ENCODE measurements at regions of chr15 and their contacts with region 1.

Region 1: DNA sequence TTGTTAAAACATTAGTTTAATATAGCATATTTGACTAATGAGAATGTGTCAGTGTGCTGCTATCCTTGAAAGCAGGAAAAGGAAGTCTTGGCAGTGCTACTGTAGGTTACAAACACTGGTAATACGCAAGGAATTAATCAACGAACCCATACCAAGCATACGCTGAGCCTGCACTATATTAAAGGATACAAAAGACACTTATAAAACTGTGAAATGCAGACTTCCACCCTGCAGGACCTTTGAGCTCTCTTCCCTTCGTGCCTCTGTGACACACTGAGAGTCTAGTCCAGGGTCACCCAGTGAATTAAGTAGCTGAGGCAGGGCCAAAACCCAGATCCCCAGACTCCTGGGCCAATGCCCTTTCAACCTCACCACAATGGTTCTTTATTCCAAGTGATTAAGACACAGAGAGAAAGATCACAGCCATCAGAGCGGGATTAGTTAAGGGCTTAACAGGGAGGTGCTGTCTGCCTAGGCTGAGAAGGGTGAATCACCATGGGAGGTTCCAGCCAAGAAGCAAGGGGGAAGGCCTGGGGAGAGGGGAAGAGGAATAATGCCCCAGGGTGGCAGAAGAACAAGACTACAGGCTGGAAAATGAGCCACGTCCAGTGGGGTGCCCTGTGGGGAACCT is 6.8 kb downstream of the ANXA2 start:
- DNase-seq: peak; percentile 82
- H3K4me3 ChIP-seq: no peak overlapping the region
- H3K27ac ChIP-seq: peak overlapping the region; percentile 95 to 99 (median 98)
- H3K4me1 ChIP-seq: peaks cover 0 to 85% (median 72%) of the 10 kb centered on the region in 4 donors
- H3K27me3 ChIP-seq: no peaks in the 10 kb centered on the region
- CTCF ChIP-seq: no peak
- EP300 ChIP-seq: no peak
- POLR2A ChIP-seq: no peak

Region 2: GRCh38 chr15:60370869-60371700 is 19.9 kb before region 1 on chr15:
- intact Hi-C with region 1: loop called (anchors 2 kb)
- DNase-seq: peak; percentile 91
- H3K4me3 ChIP-seq: no peak overlapping the region
- H3K27ac ChIP-seq: peak overlapping the region; percentile 67 to 84 (median 73)
- H3K4me1 ChIP-seq: peaks cover 0 to 60% (median 56%) of the 10 kb centered on the region in 4 donors
- H3K27me3 ChIP-seq: no peaks in the 10 kb centered on the region
- CTCF ChIP-seq: no peak
- EP300 ChIP-seq: peak in 1 of 4 donors; percentile 56
- POLR2A ChIP-seq: no peak

Region 3: GRCh38 chr15:60496853-60497252 is 105.9 kb after region 1 on chr15:
- intact Hi-C with region 1: no loop called
- DNase-seq: no peak
- H3K4me3 ChIP-seq: no peak overlapping the region
- H3K27ac ChIP-seq: no peak overlapping the region
- H3K4me1 ChIP-seq: no peaks in the 10 kb centered on the region
- H3K27me3 ChIP-seq: no peaks in the 10 kb centered on the region
- CTCF ChIP-seq: no peak
- EP300 ChIP-seq: no peak
- POLR2A ChIP-seq: no peak

Measured in sigmoid colon (tissue), 7 donors.